AG04449 (cell line): ENCODE measurements at regions of chr1 and their contacts with region 1.

Region 1: GRCh38 chr1:37859507-37860345 is at the start of gene MTF1:
- DNase-seq: peak; percentile 76
- H3K4me3 ChIP-seq: peak within 1 kb of the TSS; percentile 99
- CTCF ChIP-seq: peak; percentile 94

Region 2: GRCh38 chr1:37692078-37692833 is 167.5 kb before region 1 on chr1 and contains the start of gene CDCA8:
- CTCF ChIA-PET with region 1: interaction called, 12 read pairs
- POLR2A ChIA-PET with region 1: interaction called, 3 read pairs
- DNase-seq: peak; percentile 84
- H3K4me3 ChIP-seq: peak within 1 kb of the TSS; percentile 98
- CTCF ChIP-seq: peak; percentile 90

Region 3: GRCh38 chr1:37822906-37823815 is 36.6 kb before region 1 on chr1:
- CTCF ChIA-PET with region 1: interaction called, 16 read pairs
- POLR2A ChIA-PET with region 1: no interaction called
- DNase-seq: no peak
- H3K4me3 ChIP-seq: no peak overlapping the region
- CTCF ChIP-seq: no peak

Region 4: GRCh38 chr1:37839676-37840075 is 20.1 kb before region 1 on chr1:
- CTCF ChIA-PET with region 1: interaction called, 39 read pairs
- POLR2A ChIA-PET with region 1: no interaction called
- DNase-seq: no peak
- H3K4me3 ChIP-seq: no peak overlapping the region
- CTCF ChIP-seq: no peak

Region 5: DNA sequence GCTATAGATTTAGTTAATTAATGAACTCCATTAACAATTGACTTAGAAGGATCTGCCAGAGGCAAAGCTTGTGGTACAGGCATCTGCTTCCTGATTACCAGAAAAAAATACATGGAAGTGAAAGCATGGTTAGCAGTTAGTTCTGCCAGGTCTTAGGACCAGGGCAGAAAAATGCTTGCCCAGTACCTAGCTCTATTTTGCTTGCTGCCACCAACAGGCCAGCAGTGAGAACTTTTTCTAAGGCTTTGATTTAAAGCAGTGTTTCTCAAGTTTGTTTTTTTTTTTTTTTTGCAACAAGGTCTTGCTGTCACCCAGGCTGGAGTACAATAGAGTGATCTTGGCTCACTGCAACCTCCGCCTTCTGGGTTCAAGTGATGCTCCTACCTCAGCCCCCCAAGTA is 16.1 kb after region 1 on chr1:
- CTCF ChIA-PET with region 1: interaction called, 108 read pairs
- POLR2A ChIA-PET with region 1: interaction called, 5 read pairs
- DNase-seq: no peak
- H3K4me3 ChIP-seq: no peak overlapping the region
- CTCF ChIP-seq: peak; percentile 13

Region 6: DNA sequence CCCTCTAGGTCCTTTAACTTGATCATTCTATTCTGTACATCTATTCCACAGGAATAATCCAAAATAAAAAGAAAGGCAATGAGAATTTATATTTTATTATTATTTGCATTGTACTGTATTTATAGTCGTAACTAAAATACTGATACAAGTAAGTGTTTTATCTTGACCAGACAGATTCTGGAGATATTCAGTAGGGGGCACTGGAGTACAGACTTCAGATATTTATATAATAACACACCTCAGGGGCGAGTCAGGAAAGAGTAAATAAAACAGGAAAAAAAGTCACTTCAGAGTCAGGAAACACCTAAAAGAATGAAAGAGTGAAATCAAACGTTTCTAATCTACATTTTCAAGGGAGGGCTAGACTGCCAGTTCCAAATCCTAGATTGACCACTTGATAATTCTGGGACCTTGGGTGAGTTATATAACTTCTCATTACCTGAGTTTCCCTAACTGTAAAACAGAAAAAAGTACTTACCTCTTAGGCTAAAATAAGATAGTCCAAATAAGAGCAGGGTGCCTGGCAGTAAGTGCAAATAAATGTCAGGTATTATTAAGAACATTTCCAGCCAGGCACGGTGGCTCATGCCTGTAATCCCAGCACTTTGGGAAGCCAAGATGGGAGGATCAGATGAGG is 30.8 kb after region 1 on chr1:
- CTCF ChIA-PET with region 1: interaction called, 33 read pairs
- POLR2A ChIA-PET with region 1: no interaction called
- DNase-seq: peak; percentile 4
- H3K4me3 ChIP-seq: no peak overlapping the region
- CTCF ChIP-seq: no peak

Region 7: GRCh38 chr1:37958690-37959089 is 99.0 kb after region 1 on chr1:
- CTCF ChIA-PET with region 1: interaction called, 14 read pairs
- POLR2A ChIA-PET with region 1: no interaction called
- DNase-seq: peak; percentile 90
- H3K4me3 ChIP-seq: no peak overlapping the region
- CTCF ChIP-seq: no peak